Left ventricle myocardium inferior (tissue), 1 donor: ENCODE measurements at regions of chr1 and their contacts with region 1.

Region 1: GRCh38 chr1:12208764-12209494 is 20.9 kb upstream of the VPS13D start:
- DNase-seq: peak; percentile 85
- H3K4me3 ChIP-seq: no peak overlapping the region
- H3K27ac ChIP-seq: no peak overlapping the region
- H3K4me1 ChIP-seq: peaks cover 13% of the 10 kb centered on the region
- H3K27me3 ChIP-seq: no peaks in the 10 kb centered on the region
- CTCF ChIP-seq: peak; percentile 97

Region 2: GRCh38 chr1:12124693-12125421 is 84.1 kb before region 1 on chr1:
- intact Hi-C with region 1: loop called (anchors 2 kb)
- DNase-seq: peak; percentile 73
- H3K4me3 ChIP-seq: peak overlapping the region; percentile 35
- H3K27ac ChIP-seq: peak overlapping the region; percentile 37
- H3K4me1 ChIP-seq: peaks cover 17% of the 10 kb centered on the region
- H3K27me3 ChIP-seq: peaks cover 17% of the 10 kb centered on the region
- CTCF ChIP-seq: peak; percentile 98